Endothelial cell of umbilical vein (primary cell): ENCODE measurements at regions of chr4 and their contacts with region 1.

Region 1: GRCh38 chr4:87150498-87151261 is 69.7 kb downstream of the KLHL8 start:
- DNase-seq: peak; percentile 87
- H3K4me3 ChIP-seq: no peak overlapping the region
- H3K27ac ChIP-seq: no peak overlapping the region
- H3K4me1 ChIP-seq: no peaks in the 10 kb centered on the region
- H3K27me3 ChIP-seq: no peaks in the 10 kb centered on the region
- CTCF ChIP-seq: peak; percentile 62 to 68
- POLR2A ChIP-seq: no peak

Region 2: DNA sequence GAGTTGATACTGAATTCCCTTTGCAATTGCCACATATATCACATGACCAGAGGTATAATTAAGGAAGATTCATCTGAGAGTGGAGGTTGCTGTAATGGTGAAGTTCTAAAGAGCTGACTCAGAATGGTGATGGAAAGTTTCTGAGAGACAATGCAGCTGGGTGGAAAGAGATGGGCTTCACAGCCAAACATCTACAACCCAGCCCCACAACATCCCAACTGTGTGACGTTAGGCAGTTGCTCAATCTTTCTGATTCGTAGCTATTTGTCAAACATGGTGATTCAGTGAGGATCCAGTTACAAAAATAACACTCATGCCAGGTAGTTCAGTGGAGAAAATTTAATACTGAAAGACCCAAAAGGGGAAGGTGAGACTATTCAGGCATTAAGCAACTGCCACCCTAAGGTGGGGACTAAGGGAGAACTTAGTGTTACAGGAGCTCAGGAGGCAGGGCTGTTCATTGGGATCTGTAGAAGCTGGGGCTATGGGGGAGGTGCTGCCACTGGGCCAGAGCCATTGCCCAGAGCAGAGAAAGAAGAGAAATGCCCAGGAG is 222.8 kb before region 1 on chr4:
- CTCF ChIA-PET with region 1: interaction called, 45 read pairs
- POLR2A ChIA-PET with region 1: no interaction called
- dilution Hi-C with region 1: no loop called
- intact Hi-C with region 1: no loop called
- DNase-seq: peak; percentile 43
- H3K4me3 ChIP-seq: no peak overlapping the region
- H3K27ac ChIP-seq: no peak overlapping the region
- H3K4me1 ChIP-seq: peaks cover 29% of the 10 kb centered on the region
- H3K27me3 ChIP-seq: no peaks in the 10 kb centered on the region
- CTCF ChIP-seq: no peak
- POLR2A ChIP-seq: no peak

Region 3: DNA sequence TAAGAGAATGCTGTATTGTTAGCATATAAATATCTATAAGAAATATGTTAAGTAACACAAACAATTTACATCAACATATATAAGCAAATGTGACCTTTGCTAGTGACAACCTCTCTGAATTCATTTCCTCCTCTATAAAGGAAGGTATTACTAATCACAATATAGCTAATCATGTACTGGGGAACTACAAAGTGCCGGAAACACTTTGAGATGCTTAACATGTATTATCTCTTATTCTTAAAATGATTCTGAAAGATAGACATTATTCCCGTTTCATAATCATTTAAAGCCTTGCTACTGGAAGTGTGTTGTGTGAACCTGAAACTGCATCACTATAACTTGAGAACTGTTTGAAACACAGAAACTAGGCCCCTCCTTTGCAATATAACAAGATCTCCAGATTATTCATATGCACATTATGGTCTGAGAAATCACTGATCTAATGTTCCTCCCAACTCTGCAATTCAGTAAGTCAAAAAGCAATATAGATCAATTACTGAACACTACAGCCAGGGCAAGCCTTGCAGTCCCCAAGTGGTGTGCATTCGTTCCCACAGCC is 15.7 kb after region 1 on chr4:
- CTCF ChIA-PET with region 1: interaction called, 36 read pairs
- POLR2A ChIA-PET with region 1: no interaction called
- dilution Hi-C with region 1: no loop called
- intact Hi-C with region 1: no loop called
- DNase-seq: no peak
- H3K4me3 ChIP-seq: no peak overlapping the region
- H3K27ac ChIP-seq: no peak overlapping the region
- H3K4me1 ChIP-seq: no peaks in the 10 kb centered on the region
- H3K27me3 ChIP-seq: no peaks in the 10 kb centered on the region
- CTCF ChIP-seq: no peak
- POLR2A ChIP-seq: no peak

Region 4: DNA sequence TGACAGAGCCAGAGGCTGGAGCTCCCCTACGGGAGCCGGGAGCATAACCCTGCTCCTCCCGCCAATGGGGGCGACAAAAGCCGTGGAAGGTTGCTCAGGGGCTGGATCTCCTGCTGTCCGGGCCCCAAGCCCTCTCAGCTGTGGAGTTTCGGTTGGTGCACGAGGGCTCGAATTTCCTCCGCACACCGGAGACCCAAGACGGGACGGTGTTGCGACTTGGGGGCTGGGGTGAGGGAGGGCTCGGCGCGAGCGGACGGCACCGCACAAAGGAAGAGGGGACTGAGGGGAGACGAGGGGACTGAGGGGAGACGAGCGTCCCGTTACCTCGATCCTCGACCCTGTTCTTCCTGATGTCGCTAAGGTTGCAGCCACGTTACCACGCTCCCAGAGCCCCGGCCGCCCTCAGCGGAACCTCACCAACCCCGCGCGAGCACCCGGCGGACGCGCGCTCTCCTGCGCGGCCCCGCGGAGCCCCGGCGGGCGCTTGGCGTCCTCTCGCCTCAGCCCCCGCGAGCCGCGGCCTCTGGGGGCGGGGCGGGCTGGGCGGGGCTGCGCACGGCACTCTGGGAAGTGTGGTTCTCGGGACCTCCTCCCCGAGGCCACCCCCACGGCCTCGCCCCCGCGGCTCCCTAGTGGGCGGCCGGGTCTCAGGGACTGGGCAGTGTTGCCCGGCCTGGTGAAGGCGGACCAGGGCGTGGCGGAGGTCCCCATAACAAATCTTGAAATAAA is 69.6 kb after region 1 on chr4 and contains the start of gene KLHL8:
- CTCF ChIA-PET with region 1: interaction called, 23 read pairs
- POLR2A ChIA-PET with region 1: no interaction called
- dilution Hi-C with region 1: no loop called
- intact Hi-C with region 1: loop called (anchors 1 kb)
- DNase-seq: peak; percentile 88
- H3K4me3 ChIP-seq: peak within 1 kb of the TSS; percentile 82 to 88 (median 86)
- H3K27ac ChIP-seq: peak within 1 kb of the TSS; percentile 50
- H3K4me1 ChIP-seq: peaks cover 10% of the 10 kb centered on the region
- H3K27me3 ChIP-seq: no peaks in the 10 kb centered on the region
- CTCF ChIP-seq: peak; percentile 0 to 14
- POLR2A ChIP-seq: peak; percentile 84
- total RNA-seq, gene KLHL8: 9.0 and 9.6 TPM in 2 replicates

Region 5: GRCh38 chr4:87240341-87240740 is 89.7 kb after region 1 on chr4:
- CTCF ChIA-PET with region 1: interaction called, 71 read pairs
- POLR2A ChIA-PET with region 1: no interaction called
- dilution Hi-C with region 1: no loop called
- intact Hi-C with region 1: loop called (anchors 1 kb)
- DNase-seq: peak; percentile 19
- H3K4me3 ChIP-seq: no peak overlapping the region
- H3K27ac ChIP-seq: no peak overlapping the region
- H3K4me1 ChIP-seq: peaks cover 2% of the 10 kb centered on the region
- H3K27me3 ChIP-seq: peaks cover 0 to 6% of the 10 kb centered on the region in 2 experiments
- CTCF ChIP-seq: no peak
- POLR2A ChIP-seq: no peak